Activated T-helper 1 cell treated with anti-CD3 and anti-CD28 coated beads, Interleukin-12 subunit alpha, Interleukin-12 subunit beta, Interleukin-2, Interleukin-4 antibody, amounts not matched to agents 30 ng/mL and 10 ng/mL and 1 ng/mL, durations not matched to agents 14 hours and 24 hours and 36 hours (primary cell): ENCODE measurements at regions of chr11 and their contacts with region 1.

Region 1: DNA sequence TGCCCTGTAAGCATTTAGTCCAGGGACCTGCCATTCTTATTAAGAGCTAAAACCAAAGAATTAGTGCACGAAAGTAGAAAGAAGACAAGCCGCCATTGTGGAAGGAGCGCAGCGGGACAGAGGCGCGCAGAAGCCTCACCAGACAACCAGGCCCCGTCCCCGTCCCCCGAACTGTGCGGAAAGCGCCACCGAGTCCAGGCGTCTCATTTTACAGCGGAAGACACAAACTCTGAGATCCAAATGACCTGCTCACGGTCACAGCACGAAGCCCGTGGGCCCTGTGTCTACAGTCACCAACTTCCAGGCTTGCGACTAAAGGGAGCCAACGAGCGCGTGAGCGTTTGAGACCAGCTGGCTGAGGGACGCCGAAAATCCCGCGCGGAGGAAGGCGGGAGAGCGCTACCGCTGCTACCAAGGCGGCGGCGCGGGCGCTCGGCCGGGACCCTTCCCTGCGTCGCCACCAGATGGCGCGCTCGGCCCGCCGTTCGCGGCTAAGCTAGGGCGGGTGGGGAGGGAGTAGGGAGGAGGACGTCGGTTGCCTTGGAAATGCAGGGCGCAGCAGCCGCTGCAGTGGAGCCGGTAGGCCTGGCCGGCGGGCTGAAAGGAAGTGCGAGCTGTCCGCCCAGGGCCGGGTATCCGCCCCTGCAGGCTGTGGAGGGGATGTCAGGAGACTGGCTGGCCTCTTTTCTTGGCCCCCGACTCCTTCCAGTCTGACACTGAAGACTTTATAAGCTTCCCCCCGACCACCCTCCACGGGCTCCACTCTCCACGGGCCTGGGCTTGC is 434 bp upstream of the CCDC83 start:
- DNase-seq: peak; percentile 88
- H3K4me3 Mint-ChIP-seq: peak overlapping the region; percentile 84
- H3K27ac Mint-ChIP-seq: peak overlapping the region; percentile 83
- H3K4me1 Mint-ChIP-seq: peaks cover 18% of the 10 kb centered on the region
- H3K27me3 Mint-ChIP-seq: peaks cover 5% of the 10 kb centered on the region

Region 2: GRCh38 chr11:85647604-85648299 is 207.0 kb before region 1 on chr11 and contains the start of gene TMEM126A:
- intact Hi-C with region 1: loop called (anchors 1 kb)
- DNase-seq: peak; percentile 88
- H3K4me3 Mint-ChIP-seq: peak within 1 kb of the TSS; percentile 93
- H3K27ac Mint-ChIP-seq: peak within 1 kb of the TSS; percentile 91
- H3K4me1 Mint-ChIP-seq: peaks cover 25% of the 10 kb centered on the region
- H3K27me3 Mint-ChIP-seq: peaks cover 26% of the 10 kb centered on the region
- total RNA-seq, gene TMEM126A: 46.0 and 47.7 TPM in 2 replicates

Region 3: GRCh38 chr11:85752890-85753581 is 101.7 kb before region 1 on chr11:
- intact Hi-C with region 1: loop called (anchors 1 kb)
- DNase-seq: peak; percentile 89
- H3K4me3 Mint-ChIP-seq: peak overlapping the region; percentile 73
- H3K27ac Mint-ChIP-seq: peak overlapping the region; percentile 98
- H3K4me1 Mint-ChIP-seq: peaks cover 99% of the 10 kb centered on the region
- H3K27me3 Mint-ChIP-seq: peaks cover 4% of the 10 kb centered on the region

Region 4: GRCh38 chr11:85889676-85890579 is 35.2 kb after region 1 on chr11:
- intact Hi-C with region 1: no loop called
- DNase-seq: no peak
- H3K4me3 Mint-ChIP-seq: no peak overlapping the region
- H3K27ac Mint-ChIP-seq: no peak overlapping the region
- H3K4me1 Mint-ChIP-seq: no peaks in the 10 kb centered on the region
- H3K27me3 Mint-ChIP-seq: peaks cover 5% of the 10 kb centered on the region

Region 5: GRCh38 chr11:85941380-85941973 is 86.7 kb after region 1 on chr11:
- intact Hi-C with region 1: loop called (anchors 2 kb)
- DNase-seq: peak; percentile 11
- H3K4me3 Mint-ChIP-seq: no peak overlapping the region
- H3K27ac Mint-ChIP-seq: no peak overlapping the region
- H3K4me1 Mint-ChIP-seq: peaks cover 15% of the 10 kb centered on the region
- H3K27me3 Mint-ChIP-seq: no peaks in the 10 kb centered on the region

Region 6: GRCh38 chr11:86244522-86245368 is 390.0 kb after region 1 on chr11 and contains the start of gene EED:
- intact Hi-C with region 1: loop called (anchors 2 kb)
- DNase-seq: peak; percentile 93
- H3K4me3 Mint-ChIP-seq: no peak within 1 kb of the TSS
- H3K27ac Mint-ChIP-seq: no peak within 1 kb of the TSS
- H3K4me1 Mint-ChIP-seq: peaks cover 43% of the 10 kb centered on the region
- H3K27me3 Mint-ChIP-seq: no peaks in the 10 kb centered on the region
- total RNA-seq, gene EED: 279 and 294 TPM in 2 replicates

Region 7: DNA sequence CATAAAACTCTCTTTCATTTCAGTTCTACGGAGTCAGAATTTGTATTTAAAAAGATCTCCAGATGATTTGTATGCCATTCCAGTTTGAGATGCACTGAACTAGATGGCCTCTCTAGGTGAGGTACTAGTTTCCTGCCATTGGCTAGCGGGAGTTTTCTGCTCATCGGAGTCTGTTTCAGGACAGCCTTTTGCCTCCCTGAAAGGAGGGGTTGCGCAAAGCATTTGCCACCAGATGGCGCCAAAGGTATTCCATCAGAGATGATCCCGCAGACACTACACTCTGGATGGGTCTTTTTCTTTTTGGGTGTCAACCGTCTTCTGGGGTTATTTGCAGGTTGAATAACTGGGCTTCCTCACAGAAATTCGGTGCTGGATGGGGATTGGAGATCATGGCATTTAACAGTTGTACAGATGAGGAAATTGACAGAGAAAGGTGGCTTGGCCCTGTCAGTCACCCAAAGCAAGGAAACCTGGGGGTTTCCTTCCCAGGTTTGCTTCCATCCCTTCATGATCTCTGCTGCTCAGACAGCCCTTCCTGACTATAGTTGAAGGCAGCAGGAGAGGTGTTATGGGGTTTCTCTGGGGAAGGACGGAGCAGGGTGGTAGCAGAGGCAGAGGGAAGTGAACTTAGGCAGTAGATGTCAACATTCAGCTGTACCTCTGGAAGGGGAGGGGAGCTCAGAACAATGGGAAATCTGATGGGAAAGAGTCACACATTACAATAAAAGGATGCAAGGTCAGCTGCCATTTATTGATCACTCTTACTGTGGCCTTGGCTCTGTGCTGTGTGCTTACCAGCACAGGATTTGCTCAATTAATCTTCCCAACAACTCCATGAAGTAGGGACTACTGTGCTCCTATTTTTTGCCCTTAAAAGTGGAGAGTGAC is 601.5 kb after region 1 on chr11:
- intact Hi-C with region 1: loop called (anchors 2 kb)
- DNase-seq: peak; percentile 71
- H3K4me3 Mint-ChIP-seq: no peak overlapping the region
- H3K27ac Mint-ChIP-seq: peak overlapping the region; percentile 40
- H3K4me1 Mint-ChIP-seq: peaks cover 75% of the 10 kb centered on the region
- H3K27me3 Mint-ChIP-seq: no peaks in the 10 kb centered on the region

Region 8: GRCh38 chr11:86919557-86920210 is 1064.9 kb after region 1 on chr11:
- intact Hi-C with region 1: loop called (anchors 1 kb)
- DNase-seq: no peak
- H3K4me3 Mint-ChIP-seq: no peak overlapping the region
- H3K27ac Mint-ChIP-seq: no peak overlapping the region
- H3K4me1 Mint-ChIP-seq: peaks cover 6% of the 10 kb centered on the region
- H3K27me3 Mint-ChIP-seq: peaks cover 15% of the 10 kb centered on the region